ENCODE measurements at regions of chr1 and their contacts with region 1.

Region 1: GRCh38 chr1:8987881-8988617 is 38.2 kb downstream of the SLC2A7 start:
- DNase-seq: peak; percentile 45 to 63 (median 51)
- H3K4me3 ChIP-seq: peak overlapping the region in 1 of 2 donors; percentile 15
- H3K4me3 Mint-ChIP-seq: peak overlapping the region in 7 of 8 donors; percentile 43 to 69 (median 62)
- H3K27ac ChIP-seq: no peak overlapping the region
- H3K27ac Mint-ChIP-seq: peak overlapping the region in 6 of 7 donors; percentile 35 to 80 (median 60)
- H3K4me1 ChIP-seq: peaks cover 19% of the 10 kb centered on the region
- H3K4me1 Mint-ChIP-seq: peaks cover 8 to 31% (median 23%) of the 10 kb centered on the region in 4 donors
- H3K27me3 ChIP-seq: no peaks in the 10 kb centered on the region
- H3K27me3 Mint-ChIP-seq: peaks cover 0 to 2% of the 10 kb centered on the region in 2 donors

Region 2: DNA sequence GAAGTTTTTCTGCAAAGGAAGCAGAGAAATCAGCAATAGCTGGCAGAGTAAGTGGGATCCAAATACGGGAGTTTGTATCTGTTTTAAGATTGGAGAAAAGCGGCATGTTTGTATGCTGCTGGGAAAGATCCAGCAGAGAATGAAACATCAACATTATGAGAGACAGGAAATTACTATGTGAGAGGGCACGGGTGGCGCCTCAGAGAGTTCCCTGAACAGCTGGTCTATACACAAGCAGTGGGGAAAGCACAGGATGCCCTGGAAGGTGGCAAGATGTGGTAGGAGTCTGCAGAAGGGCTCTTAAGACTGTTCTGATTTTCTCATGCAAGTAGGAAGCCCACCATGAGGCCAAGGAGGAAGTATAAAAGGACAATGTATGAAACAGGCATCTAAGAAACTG is 301.0 kb before region 1 on chr1:
- CTCF ChIA-PET with region 1: no interaction called
- POLR2A ChIA-PET with region 1: no interaction called
- intact Hi-C with region 1: no loop called
- DNase-seq: no peak
- H3K4me3 ChIP-seq: no peak overlapping the region
- H3K4me3 Mint-ChIP-seq: no peak overlapping the region
- H3K27ac ChIP-seq: no peak overlapping the region
- H3K27ac Mint-ChIP-seq: no peak overlapping the region
- H3K4me1 ChIP-seq: no peaks in the 10 kb centered on the region
- H3K4me1 Mint-ChIP-seq: peaks cover 4 to 8% (median 6%) of the 10 kb centered on the region in 4 donors
- H3K27me3 ChIP-seq: no peaks in the 10 kb centered on the region
- H3K27me3 Mint-ChIP-seq: no peaks in the 10 kb centered on the region

Region 3: DNA sequence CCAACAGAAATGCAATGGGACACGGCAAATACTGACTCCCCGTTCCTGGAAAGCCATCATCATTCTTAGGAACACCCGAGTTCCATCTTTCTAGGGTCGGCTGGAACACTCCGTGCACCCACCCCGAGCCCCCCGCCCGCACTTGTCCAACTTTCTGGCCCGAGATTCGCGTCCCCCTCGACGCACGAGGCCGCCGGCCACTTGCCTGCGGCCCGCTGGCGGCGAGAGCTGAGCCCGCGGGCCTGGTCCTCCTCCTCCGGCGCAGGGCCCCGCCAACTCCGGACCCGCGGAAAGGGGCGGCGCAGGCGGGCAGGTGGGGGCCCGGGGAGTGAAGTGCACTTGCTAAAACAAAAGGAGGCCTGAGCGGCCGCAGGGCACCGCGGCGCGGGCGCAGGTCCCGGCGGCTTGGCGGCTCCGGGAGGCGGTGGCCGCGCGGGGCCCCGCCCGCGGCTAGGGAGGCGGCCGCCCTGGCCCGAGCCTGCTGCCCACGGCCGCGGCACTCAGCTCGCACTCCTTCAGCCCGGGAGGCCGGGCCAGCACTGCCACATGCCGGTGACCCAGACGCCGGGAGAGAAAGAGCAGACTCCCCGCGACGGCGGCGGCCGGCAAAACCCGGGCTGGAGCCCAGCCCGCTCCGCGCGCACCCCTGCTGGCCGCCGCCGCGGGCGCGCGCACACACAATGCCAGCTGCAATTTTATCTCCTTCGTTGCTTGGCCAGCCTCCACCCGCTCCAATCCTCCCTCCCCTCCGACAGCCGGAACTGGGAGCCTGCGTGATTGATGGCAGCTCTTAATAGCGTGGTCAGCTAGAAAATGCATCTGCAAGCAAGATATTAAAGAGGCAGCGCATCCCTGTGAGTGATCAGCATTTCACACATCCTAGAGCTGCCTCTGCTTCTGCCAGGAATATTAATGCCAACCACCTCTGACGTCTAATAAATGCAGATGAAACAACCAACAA is 284.9 kb before region 1 on chr1:
- CTCF ChIA-PET with region 1: no interaction called
- POLR2A ChIA-PET with region 1: no interaction called
- intact Hi-C with region 1: no loop called
- DNase-seq: peak; percentile 31 to 56 (median 44)
- H3K4me3 ChIP-seq: peak overlapping the region in 1 of 2 donors; percentile 36
- H3K4me3 Mint-ChIP-seq: peak overlapping the region; percentile 81 to 91 (median 86)
- H3K27ac ChIP-seq: no peak overlapping the region
- H3K27ac Mint-ChIP-seq: peak overlapping the region; percentile 9 to 86 (median 58)
- H3K4me1 ChIP-seq: peaks cover 32% of the 10 kb centered on the region
- H3K4me1 Mint-ChIP-seq: peaks cover 15 to 30% (median 26%) of the 10 kb centered on the region in 4 donors
- H3K27me3 ChIP-seq: peaks cover 23% of the 10 kb centered on the region
- H3K27me3 Mint-ChIP-seq: peaks cover 25 to 26% of the 10 kb centered on the region in 2 donors

Region 4: DNA sequence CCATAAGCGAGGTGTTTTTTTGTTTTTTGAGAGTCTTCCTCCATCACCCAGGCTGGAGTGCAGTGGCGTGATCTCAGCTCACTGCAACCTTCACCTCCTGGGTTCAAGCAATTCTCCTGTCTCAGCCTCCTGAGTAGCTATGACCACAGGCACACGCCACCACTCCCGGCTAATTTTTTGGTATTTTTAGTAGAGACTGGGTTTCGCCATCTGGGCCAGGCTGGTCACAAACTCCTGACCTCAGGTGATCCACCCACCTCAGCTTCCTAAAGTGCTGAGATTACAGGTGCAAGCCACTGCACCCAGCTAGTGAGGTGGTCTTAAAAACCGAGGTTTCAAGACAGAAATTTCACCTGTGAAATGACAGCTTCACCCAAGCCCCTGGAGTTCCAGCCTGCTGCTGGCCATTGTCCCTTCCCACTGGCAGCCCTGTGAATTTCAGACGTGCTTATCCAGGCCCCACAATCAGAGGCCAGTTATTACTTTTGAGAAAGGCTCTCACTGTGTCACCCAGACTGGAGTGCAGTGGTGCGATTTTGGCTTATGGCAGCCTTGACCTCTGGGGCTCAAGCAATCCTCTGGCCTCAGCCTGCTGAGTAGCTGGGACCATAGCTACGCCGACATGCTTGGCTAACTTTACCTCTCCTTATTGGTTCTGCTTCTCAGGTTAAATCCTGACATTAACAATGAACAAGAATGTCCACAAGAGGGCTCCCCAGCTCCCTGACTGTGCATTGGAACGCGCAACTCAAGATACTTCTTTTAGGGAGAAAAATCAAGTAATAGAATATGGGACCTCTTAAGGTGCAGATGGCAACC is 129.0 kb before region 1 on chr1:
- CTCF ChIA-PET with region 1: interaction called, 19 read pairs
- POLR2A ChIA-PET with region 1: no interaction called
- intact Hi-C with region 1: loop called (anchors 1 kb)
- DNase-seq: peak; percentile 50 to 58 (median 55)
- H3K4me3 ChIP-seq: no peak overlapping the region
- H3K4me3 Mint-ChIP-seq: peak overlapping the region in 5 of 8 donors; percentile 2 to 43 (median 6)
- H3K27ac ChIP-seq: no peak overlapping the region
- H3K27ac Mint-ChIP-seq: peak overlapping the region; percentile 64 to 91 (median 76)
- H3K4me1 ChIP-seq: peaks cover 10% of the 10 kb centered on the region
- H3K4me1 Mint-ChIP-seq: peaks cover 10 to 32% (median 20%) of the 10 kb centered on the region in 4 donors
- H3K27me3 ChIP-seq: no peaks in the 10 kb centered on the region
- H3K27me3 Mint-ChIP-seq: no peaks in the 10 kb centered on the region

Region 5: DNA sequence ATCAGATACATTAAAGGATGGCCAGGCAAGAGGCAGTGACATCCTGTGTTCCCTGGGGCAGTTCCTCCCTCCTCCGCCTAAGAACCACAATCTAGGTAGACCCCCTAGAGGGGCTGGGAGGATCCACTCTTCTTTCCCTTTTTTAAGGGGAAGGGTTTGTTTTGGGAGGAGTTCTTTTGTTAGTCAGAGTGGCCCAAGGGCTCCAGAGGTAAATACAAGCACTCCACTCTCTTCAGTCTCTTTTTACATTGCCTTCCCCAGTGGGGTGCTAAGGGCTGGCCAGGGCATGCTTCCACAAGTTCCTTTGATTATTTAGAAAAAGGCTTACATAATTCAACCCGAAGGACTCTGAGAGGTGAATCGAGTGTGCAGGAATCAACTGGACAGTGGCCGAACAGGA is 76.6 kb before region 1 on chr1:
- CTCF ChIA-PET with region 1: interaction called, 154 read pairs
- POLR2A ChIA-PET with region 1: no interaction called
- intact Hi-C with region 1: no loop called
- DNase-seq: no peak
- H3K4me3 ChIP-seq: no peak overlapping the region
- H3K4me3 Mint-ChIP-seq: no peak overlapping the region
- H3K27ac ChIP-seq: no peak overlapping the region
- H3K27ac Mint-ChIP-seq: peak overlapping the region in 1 of 7 donors; percentile 47
- H3K4me1 ChIP-seq: no peaks in the 10 kb centered on the region
- H3K4me1 Mint-ChIP-seq: no peaks in the 10 kb centered on the region
- H3K27me3 ChIP-seq: no peaks in the 10 kb centered on the region
- H3K27me3 Mint-ChIP-seq: peaks cover 0 to 6% of the 10 kb centered on the region in 2 donors

Region 6: GRCh38 chr1:8925406-8925805 is 62.6 kb before region 1 on chr1:
- CTCF ChIA-PET with region 1: interaction called, 154 read pairs
- POLR2A ChIA-PET with region 1: interaction called, 3 read pairs
- intact Hi-C with region 1: no loop called
- DNase-seq: no peak
- H3K4me3 ChIP-seq: no peak overlapping the region
- H3K4me3 Mint-ChIP-seq: no peak overlapping the region
- H3K27ac ChIP-seq: no peak overlapping the region
- H3K27ac Mint-ChIP-seq: no peak overlapping the region
- H3K4me1 ChIP-seq: peaks cover 12% of the 10 kb centered on the region
- H3K4me1 Mint-ChIP-seq: peaks cover 8 to 20% (median 11%) of the 10 kb centered on the region in 4 donors
- H3K27me3 ChIP-seq: no peaks in the 10 kb centered on the region
- H3K27me3 Mint-ChIP-seq: no peaks in the 10 kb centered on the region

Region 7: GRCh38 chr1:8962812-8963530 is 25.1 kb before region 1 on chr1:
- CTCF ChIA-PET with region 1: interaction called, 75 read pairs
- POLR2A ChIA-PET with region 1: interaction called, 3 read pairs
- intact Hi-C with region 1: loop called (anchors 1 kb)
- DNase-seq: no peak
- H3K4me3 ChIP-seq: no peak overlapping the region
- H3K4me3 Mint-ChIP-seq: peak overlapping the region in 5 of 8 donors; percentile 3 to 64 (median 51)
- H3K27ac ChIP-seq: no peak overlapping the region
- H3K27ac Mint-ChIP-seq: peak overlapping the region in 5 of 7 donors; percentile 34 to 74 (median 57)
- H3K4me1 ChIP-seq: peaks cover 29% of the 10 kb centered on the region
- H3K4me1 Mint-ChIP-seq: peaks cover 26 to 63% (median 38%) of the 10 kb centered on the region in 4 donors
- H3K27me3 ChIP-seq: no peaks in the 10 kb centered on the region
- H3K27me3 Mint-ChIP-seq: peaks cover 0 to 3% of the 10 kb centered on the region in 2 donors

Region 8: GRCh38 chr1:8970870-8971337 is 17.1 kb before region 1 on chr1:
- CTCF ChIA-PET with region 1: interaction called, 38 read pairs
- POLR2A ChIA-PET with region 1: interaction called, 7 read pairs
- intact Hi-C with region 1: loop called (anchors 2 kb)
- DNase-seq: peak; percentile 59 to 74 (median 66)
- H3K4me3 ChIP-seq: peak overlapping the region; percentile 14 to 19
- H3K4me3 Mint-ChIP-seq: peak overlapping the region; percentile 83 to 96 (median 92)
- H3K27ac ChIP-seq: peak overlapping the region; percentile 45
- H3K27ac Mint-ChIP-seq: peak overlapping the region; percentile 73 to 97 (median 93)
- H3K4me1 ChIP-seq: peaks cover 31% of the 10 kb centered on the region
- H3K4me1 Mint-ChIP-seq: peaks cover 27 to 68% (median 39%) of the 10 kb centered on the region in 4 donors
- H3K27me3 ChIP-seq: no peaks in the 10 kb centered on the region
- H3K27me3 Mint-ChIP-seq: no peaks in the 10 kb centered on the region